ENCODE measurements at regions of chr9 and their contacts with region 1.

Region 1: DNA sequence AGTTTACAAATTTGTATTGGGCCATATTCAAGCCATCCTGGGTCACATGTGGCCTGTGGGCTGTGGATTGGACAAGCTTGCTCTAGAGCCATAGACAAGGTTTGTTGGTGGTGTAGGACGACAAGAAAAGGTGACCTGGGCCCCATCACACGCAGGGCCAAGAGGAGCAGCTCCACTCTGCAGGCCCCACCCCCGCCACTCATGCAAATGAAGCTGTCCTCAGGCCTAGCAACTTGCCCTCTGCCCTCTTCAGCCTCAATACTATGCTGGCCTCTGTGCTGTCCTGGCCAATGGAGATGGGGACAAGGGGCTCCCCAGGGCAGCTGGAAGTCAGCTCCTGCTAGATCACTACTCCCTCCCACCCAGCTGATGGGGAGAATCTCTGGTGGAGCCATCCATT is 55.2 kb upstream of the TMEM252 start:
- DNase-seq: no peak
- H3K4me3 ChIP-seq: no peak overlapping the region
- H3K27ac ChIP-seq: no peak overlapping the region
- H3K4me1 ChIP-seq: no peaks in the 10 kb centered on the region
- H3K27me3 ChIP-seq: no peaks in the 10 kb centered on the region
- CTCF ChIP-seq: no peak
- POLR2A ChIP-seq: no peak

Region 2: DNA sequence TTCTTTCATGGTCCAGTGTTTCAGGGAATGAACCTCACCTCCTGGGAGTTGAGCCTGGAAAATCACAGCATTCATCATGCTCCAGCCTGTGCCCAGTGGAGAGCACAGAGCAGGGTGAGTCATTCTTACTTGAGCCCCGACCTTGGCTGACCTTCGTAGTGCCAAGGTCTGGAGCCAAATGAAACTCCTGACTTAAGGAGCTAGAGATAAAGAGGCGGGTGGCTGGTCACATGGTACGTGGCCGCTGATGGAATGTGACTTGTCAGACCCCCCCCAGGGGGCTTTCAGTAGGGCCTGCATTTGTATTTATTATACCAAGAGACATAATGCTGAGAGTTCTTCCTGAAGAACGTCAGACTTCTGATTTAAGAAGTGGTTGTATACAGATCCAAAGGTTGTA is 94.2 kb after region 1 on chr9:
- intact Hi-C with region 1: loop called (anchors 10 kb)
- DNase-seq: no peak
- H3K4me3 ChIP-seq: no peak overlapping the region
- H3K27ac ChIP-seq: no peak overlapping the region
- H3K4me1 ChIP-seq: no peaks in the 10 kb centered on the region
- H3K27me3 ChIP-seq: no peaks in the 10 kb centered on the region
- CTCF ChIP-seq: no peak
- POLR2A ChIP-seq: no peak